ENCODE measurements at regions of chr5 and their contacts with region 1.

Region 1: DNA sequence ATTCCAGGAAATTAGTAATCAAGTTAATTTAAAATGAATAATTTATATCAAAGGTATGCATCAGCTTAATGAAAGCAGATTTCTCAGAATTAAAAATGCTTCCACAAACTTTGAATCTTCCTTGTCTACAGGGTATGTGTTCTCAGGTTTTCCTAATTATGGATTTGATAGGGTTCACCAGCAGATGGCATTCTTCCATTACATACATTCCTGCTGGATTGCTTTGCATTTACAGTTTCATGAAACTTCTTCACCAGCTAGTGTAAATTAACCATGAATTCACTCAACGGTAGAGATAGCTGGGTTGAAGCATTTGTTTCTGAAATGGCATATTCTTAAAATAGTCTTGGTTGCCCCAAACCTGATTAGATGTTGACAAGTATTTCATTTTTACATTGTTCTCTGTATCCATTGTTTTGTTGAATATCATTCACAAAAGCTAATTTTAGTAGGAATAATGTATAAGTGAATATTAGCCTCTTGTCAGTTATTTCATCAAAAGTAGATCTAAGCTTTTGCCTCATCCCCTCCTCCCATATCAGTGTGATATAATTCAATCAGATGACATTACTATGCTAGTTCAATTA is 68.7 kb upstream of the WDR41 start:
- DNase-seq: peak in 4 of 9 donors; percentile 1 to 13 (median 6)
- ATAC-seq: no peak
- H3K4me3 ChIP-seq: no peak overlapping the region
- H3K4me3 Mint-ChIP-seq: no peak overlapping the region
- H3K27ac ChIP-seq: no peak overlapping the region
- H3K27ac Mint-ChIP-seq: no peak overlapping the region
- H3K4me1 ChIP-seq: no peaks in the 10 kb centered on the region
- H3K4me1 Mint-ChIP-seq: no peaks in the 10 kb centered on the region
- H3K27me3 ChIP-seq: no peaks in the 10 kb centered on the region
- H3K27me3 Mint-ChIP-seq: peaks cover 0 to 17% (median 4%) of the 10 kb centered on the region in 5 donors

Region 2: GRCh38 chr5:78008356-78008967 is 447.7 kb after region 1 on chr5:
- CTCF ChIA-PET with region 1: no interaction called
- POLR2A ChIA-PET with region 1: no interaction called
- intact Hi-C with region 1: loop called in 1 of 2 experiments (anchors 1 kb)
- DNase-seq: peak in 1 of 9 donors; percentile 7
- ATAC-seq: no peak
- H3K4me3 ChIP-seq: no peak overlapping the region
- H3K4me3 Mint-ChIP-seq: no peak overlapping the region
- H3K27ac ChIP-seq: no peak overlapping the region
- H3K27ac Mint-ChIP-seq: no peak overlapping the region
- H3K4me1 ChIP-seq: no peaks in the 10 kb centered on the region
- H3K4me1 Mint-ChIP-seq: peaks cover 0 to 1% (median 0%) of the 10 kb centered on the region in 7 donors
- H3K27me3 ChIP-seq: no peaks in the 10 kb centered on the region
- H3K27me3 Mint-ChIP-seq: no peaks in the 10 kb centered on the region

Region 3: DNA sequence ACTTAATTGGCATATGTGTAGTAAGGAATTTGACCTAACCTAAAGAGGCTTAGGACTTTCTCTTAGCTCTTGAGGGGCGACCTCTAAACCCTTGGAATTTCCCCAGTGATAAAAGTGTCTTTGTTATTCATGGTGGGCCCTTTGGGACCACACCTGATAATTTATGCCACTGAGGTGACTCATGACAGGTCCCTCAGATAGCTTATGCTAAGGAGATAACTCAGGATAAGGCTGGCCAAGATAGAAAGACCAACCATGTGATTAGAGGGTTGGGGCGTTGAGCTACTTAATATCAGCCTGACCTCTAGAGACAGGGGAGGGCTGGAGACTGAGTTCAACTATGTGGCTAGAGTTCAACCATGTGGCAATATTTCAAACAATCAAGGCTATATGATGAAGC is 515.6 kb after region 1 on chr5:
- CTCF ChIA-PET with region 1: no interaction called
- POLR2A ChIA-PET with region 1: no interaction called
- intact Hi-C with region 1: no loop called
- DNase-seq: no peak
- ATAC-seq: no peak
- H3K4me3 ChIP-seq: no peak overlapping the region
- H3K4me3 Mint-ChIP-seq: no peak overlapping the region
- H3K27ac ChIP-seq: no peak overlapping the region
- H3K27ac Mint-ChIP-seq: no peak overlapping the region
- H3K4me1 ChIP-seq: no peaks in the 10 kb centered on the region
- H3K4me1 Mint-ChIP-seq: peaks cover 0 to 6% (median 0%) of the 10 kb centered on the region in 7 donors
- H3K27me3 ChIP-seq: no peaks in the 10 kb centered on the region
- H3K27me3 Mint-ChIP-seq: no peaks in the 10 kb centered on the region

Region 4: DNA sequence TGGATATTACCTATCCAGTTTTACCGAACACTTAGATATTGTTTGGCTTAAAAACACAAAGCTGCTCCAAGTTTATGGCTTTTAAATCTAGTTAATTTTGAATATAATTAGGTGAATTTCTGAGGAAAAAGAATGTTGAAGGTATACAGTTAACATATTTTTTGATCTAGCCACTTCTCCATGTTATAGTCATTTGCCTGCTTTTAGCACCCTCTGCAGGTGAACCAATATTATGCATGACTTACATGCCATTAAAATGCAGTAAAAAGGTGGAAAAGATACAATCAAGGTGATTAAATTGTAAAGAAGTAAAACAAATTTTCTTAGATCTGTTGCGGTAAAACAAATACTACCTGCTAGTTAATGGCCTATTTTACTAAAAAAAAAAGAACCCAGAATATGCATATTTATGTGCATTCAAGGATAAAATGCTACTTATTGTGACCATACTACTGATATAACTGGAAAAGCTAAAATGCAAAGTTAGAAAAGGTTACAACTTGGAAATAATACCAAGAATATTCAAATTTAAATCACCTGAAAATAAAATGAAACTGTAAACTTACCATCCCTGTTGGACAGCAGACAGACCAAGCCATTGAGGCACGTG is 601.6 kb after region 1 on chr5:
- CTCF ChIA-PET with region 1: no interaction called
- POLR2A ChIA-PET with region 1: no interaction called
- intact Hi-C with region 1: loop called in 1 of 2 experiments (anchors 1 kb)
- DNase-seq: peak in 5 of 9 donors; percentile 5 to 20 (median 13)
- ATAC-seq: no peak
- H3K4me3 ChIP-seq: no peak overlapping the region
- H3K4me3 Mint-ChIP-seq: no peak overlapping the region
- H3K27ac ChIP-seq: no peak overlapping the region
- H3K27ac Mint-ChIP-seq: no peak overlapping the region
- H3K4me1 ChIP-seq: no peaks in the 10 kb centered on the region
- H3K4me1 Mint-ChIP-seq: no peaks in the 10 kb centered on the region
- H3K27me3 ChIP-seq: no peaks in the 10 kb centered on the region
- H3K27me3 Mint-ChIP-seq: no peaks in the 10 kb centered on the region

Region 5: GRCh38 chr5:78300464-78301045 is 739.8 kb after region 1 on chr5:
- CTCF ChIA-PET with region 1: no interaction called
- POLR2A ChIA-PET with region 1: no interaction called
- intact Hi-C with region 1: loop called in 1 of 2 experiments (anchors 2 kb)
- DNase-seq: peak in 2 of 9 donors; percentile 8 to 14
- ATAC-seq: no peak
- H3K4me3 ChIP-seq: no peak overlapping the region
- H3K4me3 Mint-ChIP-seq: no peak overlapping the region
- H3K27ac ChIP-seq: no peak overlapping the region
- H3K27ac Mint-ChIP-seq: no peak overlapping the region
- H3K4me1 ChIP-seq: no peaks in the 10 kb centered on the region
- H3K4me1 Mint-ChIP-seq: peaks cover 0 to 4% (median 4%) of the 10 kb centered on the region in 7 donors
- H3K27me3 ChIP-seq: no peaks in the 10 kb centered on the region
- H3K27me3 Mint-ChIP-seq: peaks cover 0 to 48% (median 10%) of the 10 kb centered on the region in 5 donors